AG04449 (cell line): ENCODE measurements at regions of chr6 and their contacts with region 1.

Region 1: DNA sequence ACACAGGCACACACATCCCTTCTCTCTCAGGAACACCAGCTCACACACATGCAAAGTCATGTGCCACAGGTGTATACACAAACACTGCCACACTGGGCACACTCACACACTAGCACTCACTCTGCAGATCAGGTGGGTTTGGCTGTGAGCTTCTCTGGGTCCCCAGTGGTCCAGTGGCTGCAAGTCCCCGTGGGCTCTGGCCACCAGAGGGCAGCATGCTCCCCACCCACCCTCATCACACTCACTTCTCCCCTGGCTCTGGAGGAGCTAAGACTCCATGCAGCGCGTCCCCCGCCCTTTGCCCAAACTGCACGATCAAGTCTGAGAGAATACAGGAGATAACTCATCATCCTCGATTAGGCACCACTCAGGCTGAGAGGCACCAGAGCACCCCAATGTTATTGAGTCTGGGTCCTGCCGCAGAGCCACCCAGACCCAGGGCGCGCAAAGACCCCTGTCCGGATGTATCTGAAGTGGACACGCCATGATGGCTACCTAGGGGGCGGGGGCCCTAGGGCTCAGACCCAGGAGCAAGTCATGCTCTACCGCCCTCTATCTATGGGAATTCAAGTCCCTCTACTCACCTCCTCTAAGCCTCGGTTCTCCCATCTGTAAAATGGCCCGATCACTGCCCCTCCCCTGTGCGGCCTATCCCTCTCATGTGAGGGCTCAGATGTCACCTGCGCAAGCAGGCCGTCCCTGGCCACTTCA is 90.5 kb downstream of the GRM4 start:
- DNase-seq: no peak
- H3K4me3 ChIP-seq: no peak overlapping the region
- CTCF ChIP-seq: peak; percentile 86

Region 2: GRCh38 chr6:34043359-34043758 is 12.0 kb before region 1 on chr6:
- CTCF ChIA-PET with region 1: interaction called, 19 read pairs
- POLR2A ChIA-PET with region 1: no interaction called
- DNase-seq: no peak
- H3K4me3 ChIP-seq: no peak overlapping the region
- CTCF ChIP-seq: no peak

Region 3: GRCh38 chr6:34067814-34068213 is 12.4 kb after region 1 on chr6:
- CTCF ChIA-PET with region 1: interaction called, 13 read pairs
- POLR2A ChIA-PET with region 1: no interaction called
- DNase-seq: no peak
- H3K4me3 ChIP-seq: no peak overlapping the region
- CTCF ChIP-seq: no peak

Region 4: GRCh38 chr6:34145161-34146020 is 90.0 kb after region 1 on chr6:
- CTCF ChIA-PET with region 1: interaction called, 10 read pairs
- POLR2A ChIA-PET with region 1: no interaction called
- DNase-seq: no peak
- H3K4me3 ChIP-seq: peak overlapping the region; percentile 50
- CTCF ChIP-seq: no peak

Region 5: DNA sequence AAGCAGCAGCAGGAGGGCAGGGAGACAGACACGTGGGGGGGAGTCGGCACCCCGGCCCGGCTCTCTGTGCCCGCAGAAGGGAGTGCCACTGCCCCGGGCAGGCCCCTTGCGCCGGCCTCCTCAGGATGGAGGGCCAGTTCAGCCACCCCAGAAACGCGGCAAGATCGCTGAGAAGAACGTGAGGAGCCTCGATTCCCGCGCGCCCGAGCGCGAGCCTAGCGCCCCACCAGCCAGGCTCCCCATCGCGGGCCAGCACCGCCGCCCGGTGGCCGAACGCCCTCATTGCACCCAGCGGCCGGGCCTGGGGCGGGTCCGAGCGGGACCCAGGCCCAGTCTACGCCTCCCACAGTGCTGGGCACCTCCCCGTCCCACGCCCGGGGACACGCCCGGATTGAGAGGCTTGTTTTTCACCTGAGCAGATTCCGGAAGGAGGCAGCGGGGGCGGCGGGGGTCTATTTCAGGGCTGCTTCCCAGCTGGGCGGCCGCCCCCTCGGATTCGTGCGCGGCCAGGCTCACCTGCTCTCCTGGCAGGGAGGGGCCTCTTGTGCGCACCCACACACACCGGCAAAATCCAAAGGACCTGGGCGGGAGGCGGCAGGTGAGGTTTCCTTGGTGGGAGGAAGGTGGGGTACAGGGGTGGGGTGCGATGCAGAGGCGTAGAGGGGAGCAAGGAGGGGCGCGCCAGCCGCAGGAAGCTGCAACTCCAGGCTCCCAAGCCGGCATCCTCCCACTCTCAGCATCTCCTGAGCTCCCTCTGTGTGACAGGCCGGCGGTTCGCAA is 99.5 kb after region 1 on chr6:
- CTCF ChIA-PET with region 1: interaction called, 57 read pairs
- POLR2A ChIA-PET with region 1: no interaction called
- DNase-seq: no peak
- H3K4me3 ChIP-seq: peak overlapping the region; percentile 42
- CTCF ChIP-seq: peak; percentile 94